ENCODE measurements at regions of chr1 and their contacts with region 1.

Region 1: GRCh38 chr1:66624412-66625060 is 90.6 kb downstream of the SGIP1 start:
- DNase-seq: no peak
- ATAC-seq: no peak

Region 2: DNA sequence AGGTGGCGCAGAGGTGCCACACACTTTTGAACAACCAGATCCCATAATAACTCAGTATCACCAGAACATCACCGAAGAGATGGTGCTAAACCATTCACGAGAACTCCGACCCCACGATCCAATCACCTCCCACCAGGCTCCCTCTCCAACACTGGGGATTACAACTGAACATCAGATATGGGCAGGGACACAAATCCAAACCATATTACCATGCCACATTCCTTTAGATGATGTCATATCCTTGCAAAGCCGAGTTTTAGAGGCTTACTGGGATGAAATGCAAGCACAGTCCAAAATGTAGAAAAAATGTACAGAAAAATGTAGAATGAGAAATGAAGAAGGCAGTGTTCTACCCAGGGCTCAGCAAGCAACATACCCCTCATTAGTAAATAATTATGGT is 25.9 kb before region 1 on chr1:
- intact Hi-C with region 1: loop called (anchors 1 kb)
- DNase-seq: no peak
- ATAC-seq: no peak

Measured in sciatic nerve (tissue), 2 donors.